CD4-positive, alpha-beta memory T cell (primary cell): ENCODE measurements at regions of chr2 and their contacts with region 1.

Region 1: GRCh38 chr2:127064642-127065250 is 42.2 kb downstream of the BIN1 start:
- DNase-seq: peak in 1 of 5 donors; percentile 62
- H3K4me3 ChIP-seq: no peak overlapping the region
- H3K4me3 Mint-ChIP-seq: no peak overlapping the region
- H3K27ac ChIP-seq: peak overlapping the region; percentile 9
- H3K27ac Mint-ChIP-seq: peak overlapping the region in 2 of 7 donors; percentile 35 to 54
- H3K4me1 ChIP-seq: peaks cover 15% of the 10 kb centered on the region
- H3K4me1 Mint-ChIP-seq: peaks cover 6 to 31% (median 16%) of the 10 kb centered on the region in 4 donors
- H3K27me3 ChIP-seq: no peaks in the 10 kb centered on the region
- H3K27me3 Mint-ChIP-seq: no peaks in the 10 kb centered on the region

Region 2: DNA sequence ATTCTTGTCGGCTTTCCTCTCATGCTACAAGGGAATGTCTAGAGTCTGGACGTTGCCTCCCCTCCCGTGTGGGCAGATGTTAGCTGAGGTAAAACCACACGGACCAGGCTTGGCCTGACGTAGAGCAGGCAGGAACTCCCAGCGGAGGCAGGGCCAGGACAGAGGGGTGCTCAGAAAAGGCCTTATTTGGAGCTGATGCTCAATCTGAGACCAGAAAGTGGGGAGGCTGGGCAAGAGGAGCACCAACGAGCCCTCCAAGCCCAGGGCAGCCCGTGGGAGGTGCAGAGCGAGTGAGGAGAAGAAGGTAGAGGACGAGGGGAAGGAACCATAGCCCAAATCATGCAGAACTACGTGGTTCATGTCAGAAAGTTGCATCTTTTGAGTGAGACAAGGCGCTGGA is 157.1 kb before region 1 on chr2:
- CTCF ChIA-PET with region 1: no interaction called
- POLR2A ChIA-PET with region 1: no interaction called
- intact Hi-C with region 1: no loop called
- DNase-seq: no peak
- H3K4me3 ChIP-seq: no peak overlapping the region
- H3K4me3 Mint-ChIP-seq: no peak overlapping the region
- H3K27ac ChIP-seq: no peak overlapping the region
- H3K27ac Mint-ChIP-seq: no peak overlapping the region
- H3K4me1 ChIP-seq: no peaks in the 10 kb centered on the region
- H3K4me1 Mint-ChIP-seq: no peaks in the 10 kb centered on the region
- H3K27me3 ChIP-seq: no peaks in the 10 kb centered on the region
- H3K27me3 Mint-ChIP-seq: peaks cover 4 to 22% of the 10 kb centered on the region in 2 donors

Region 3: DNA sequence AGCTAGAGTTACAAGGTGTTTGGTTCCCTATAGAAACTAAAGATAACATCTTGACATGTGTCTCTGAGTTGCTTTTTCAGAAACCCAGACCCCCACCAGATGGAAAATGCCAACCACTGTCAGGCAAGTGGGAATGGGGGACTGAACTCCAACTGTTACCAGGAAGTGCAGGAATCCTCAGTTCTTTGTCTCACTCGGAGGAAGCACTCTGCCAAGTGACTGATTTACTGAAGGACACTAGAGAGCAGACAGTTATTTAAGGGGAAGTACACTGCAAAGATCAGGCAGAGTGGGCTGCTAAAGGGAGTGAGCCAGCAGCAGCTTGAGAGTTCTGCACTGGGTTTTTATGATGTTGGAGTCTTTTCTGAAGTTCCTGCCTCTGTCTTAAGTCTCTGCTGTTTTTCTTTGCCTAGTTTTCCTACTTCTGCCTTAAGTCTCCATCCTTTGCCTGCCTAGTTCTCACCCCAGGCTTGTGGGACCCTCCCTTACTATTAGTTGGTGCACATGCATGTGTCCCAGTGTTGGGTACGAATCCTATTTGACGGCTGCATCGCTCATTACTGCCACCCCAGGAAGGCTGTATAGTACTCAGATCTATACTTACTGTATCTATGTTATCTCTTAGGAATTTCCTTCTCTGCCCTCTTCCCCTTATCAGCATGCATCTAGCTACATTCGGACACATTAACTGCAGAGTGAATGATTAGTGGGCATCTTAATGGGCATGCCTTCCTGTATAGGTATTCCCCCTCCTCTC is 68.9 kb before region 1 on chr2:
- CTCF ChIA-PET with region 1: no interaction called
- POLR2A ChIA-PET with region 1: no interaction called
- intact Hi-C with region 1: no loop called
- DNase-seq: no peak
- H3K4me3 ChIP-seq: no peak overlapping the region
- H3K4me3 Mint-ChIP-seq: no peak overlapping the region
- H3K27ac ChIP-seq: no peak overlapping the region
- H3K27ac Mint-ChIP-seq: no peak overlapping the region
- H3K4me1 ChIP-seq: no peaks in the 10 kb centered on the region
- H3K4me1 Mint-ChIP-seq: no peaks in the 10 kb centered on the region
- H3K27me3 ChIP-seq: no peaks in the 10 kb centered on the region
- H3K27me3 Mint-ChIP-seq: peaks cover 8 to 9% of the 10 kb centered on the region in 2 donors

Region 4: DNA sequence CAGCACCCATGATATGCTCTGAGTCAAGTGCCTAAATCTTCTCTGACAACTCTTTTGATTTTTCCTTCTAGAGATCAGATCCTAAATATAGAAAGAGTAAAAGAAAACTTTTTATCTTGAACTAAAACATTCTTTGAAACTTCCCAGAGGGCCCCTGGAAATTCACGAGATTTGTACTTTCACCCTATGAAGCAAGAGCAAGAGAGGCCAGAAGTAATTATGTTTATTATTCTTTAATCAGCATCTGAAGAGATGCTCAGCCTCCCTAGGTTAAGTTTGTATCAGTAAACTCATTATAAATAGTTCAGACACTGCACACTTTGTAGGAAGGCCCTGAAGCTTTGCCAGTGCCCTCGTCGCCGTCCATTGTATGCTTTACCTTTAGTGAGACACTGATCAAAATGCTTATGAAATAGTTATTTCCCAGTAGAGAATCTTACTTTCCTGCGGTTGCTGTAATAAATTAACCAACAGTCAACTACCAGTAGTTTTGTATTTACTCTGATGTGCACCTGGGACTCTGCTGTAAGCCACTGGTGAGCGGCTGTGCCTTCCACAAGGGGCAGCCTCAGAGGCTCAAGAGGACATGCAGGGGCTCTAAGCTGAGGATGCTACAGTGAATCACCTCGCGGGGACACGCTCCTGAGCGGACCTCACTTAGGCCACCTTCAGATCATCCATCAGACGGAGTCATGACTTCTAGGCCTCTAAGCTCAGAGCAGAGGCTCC is 29.7 kb before region 1 on chr2:
- CTCF ChIA-PET with region 1: no interaction called
- POLR2A ChIA-PET with region 1: no interaction called
- intact Hi-C with region 1: no loop called
- DNase-seq: no peak
- H3K4me3 ChIP-seq: no peak overlapping the region
- H3K4me3 Mint-ChIP-seq: no peak overlapping the region
- H3K27ac ChIP-seq: no peak overlapping the region
- H3K27ac Mint-ChIP-seq: no peak overlapping the region
- H3K4me1 ChIP-seq: no peaks in the 10 kb centered on the region
- H3K4me1 Mint-ChIP-seq: peaks cover 0 to 5% (median 0%) of the 10 kb centered on the region in 4 donors
- H3K27me3 ChIP-seq: peaks cover 4% of the 10 kb centered on the region
- H3K27me3 Mint-ChIP-seq: peaks cover 1 to 3% of the 10 kb centered on the region in 2 donors

Region 5: GRCh38 chr2:127106951-127107621 is 42.3 kb after region 1 on chr2 and contains the start of gene BIN1:
- CTCF ChIA-PET with region 1: interaction called, 15 read pairs
- POLR2A ChIA-PET with region 1: no interaction called
- intact Hi-C with region 1: loop called (anchors 1 kb)
- DNase-seq: peak; percentile 61 to 84 (median 66)
- H3K4me3 ChIP-seq: peak within 1 kb of the TSS; percentile 11 to 51
- H3K4me3 Mint-ChIP-seq: peak within 1 kb of the TSS; percentile 84 to 91 (median 88)
- H3K27ac ChIP-seq: peak within 1 kb of the TSS; percentile 15
- H3K27ac Mint-ChIP-seq: peak within 1 kb of the TSS in 5 of 7 donors; percentile 18 to 86 (median 56)
- H3K4me1 ChIP-seq: peaks cover 21% of the 10 kb centered on the region
- H3K4me1 Mint-ChIP-seq: peaks cover 0 to 12% (median 4%) of the 10 kb centered on the region in 4 donors
- H3K27me3 ChIP-seq: peaks cover 5% of the 10 kb centered on the region
- H3K27me3 Mint-ChIP-seq: peaks cover 6 to 15% of the 10 kb centered on the region in 2 donors
- total RNA-seq, gene BIN1: 99.4 to 103 TPM

Region 6: GRCh38 chr2:127143841-127144782 is 79.4 kb after region 1 on chr2:
- CTCF ChIA-PET with region 1: interaction called, 15 read pairs
- POLR2A ChIA-PET with region 1: no interaction called
- intact Hi-C with region 1: loop called (anchors 2 kb)
- DNase-seq: no peak
- H3K4me3 ChIP-seq: no peak overlapping the region
- H3K4me3 Mint-ChIP-seq: no peak overlapping the region
- H3K27ac ChIP-seq: no peak overlapping the region
- H3K27ac Mint-ChIP-seq: peak overlapping the region in 1 of 7 donors; percentile 17
- H3K4me1 ChIP-seq: no peaks in the 10 kb centered on the region
- H3K4me1 Mint-ChIP-seq: peaks cover 0 to 2% (median under 1%) of the 10 kb centered on the region in 4 donors
- H3K27me3 ChIP-seq: no peaks in the 10 kb centered on the region
- H3K27me3 Mint-ChIP-seq: peaks cover 3% of the 10 kb centered on the region in 2 donors